Stomach (tissue), 19 donors: ENCODE measurements at regions of chr2 and their contacts with region 1.

Region 1: GRCh38 chr2:157876066-157876787 is at the start of gene ACVR1:
- DNase-seq: peak; percentile 96 to 98
- H3K4me3 ChIP-seq: peak within 1 kb of the TSS; percentile 68 to 87 (median 78)
- H3K27ac ChIP-seq: peak within 1 kb of the TSS; percentile 97 to 100 (median 98)
- H3K4me1 ChIP-seq: peaks cover 26 to 63% (median 45%) of the 10 kb centered on the region in 4 donors
- H3K27me3 ChIP-seq: no peaks in the 10 kb centered on the region
- CTCF ChIP-seq: peak in 1 of 7 experiments; percentile 67
- EP300 ChIP-seq: no peak
- POLR2A ChIP-seq: peak in 1 of 4 donors; percentile 15
- total RNA-seq, gene ACVR1: 2.3 to 32.1 (median 18.4) TPM

Region 2: DNA sequence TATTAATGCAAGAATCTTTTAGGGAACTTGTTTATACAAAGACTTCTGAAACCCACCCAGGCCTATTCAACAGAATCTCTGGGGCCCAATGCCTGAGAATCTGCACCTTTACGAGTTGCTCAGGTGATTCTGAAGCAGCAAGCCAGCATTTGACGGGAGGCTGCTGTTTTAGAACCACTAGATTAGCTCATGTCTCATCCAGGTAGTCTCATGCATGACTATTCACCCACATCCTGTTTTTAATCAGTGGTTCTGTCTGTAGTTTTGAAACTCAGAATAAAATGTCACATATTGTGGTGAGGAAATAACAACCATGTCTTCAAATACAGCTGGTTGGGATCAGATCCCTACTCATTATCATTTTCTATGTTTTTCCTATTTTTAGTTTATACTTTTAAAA is 471.9 kb before region 1 on chr2:
- intact Hi-C with region 1: no loop called
- DNase-seq: peak in 1 of 2 donors; percentile 68
- H3K4me3 ChIP-seq: no peak overlapping the region
- H3K27ac ChIP-seq: peak overlapping the region in 2 of 5 donors; percentile 44 to 58
- H3K4me1 ChIP-seq: no peaks in the 10 kb centered on the region
- H3K27me3 ChIP-seq: no peaks in the 10 kb centered on the region
- CTCF ChIP-seq: no peak
- EP300 ChIP-seq: no peak
- POLR2A ChIP-seq: no peak

Region 3: DNA sequence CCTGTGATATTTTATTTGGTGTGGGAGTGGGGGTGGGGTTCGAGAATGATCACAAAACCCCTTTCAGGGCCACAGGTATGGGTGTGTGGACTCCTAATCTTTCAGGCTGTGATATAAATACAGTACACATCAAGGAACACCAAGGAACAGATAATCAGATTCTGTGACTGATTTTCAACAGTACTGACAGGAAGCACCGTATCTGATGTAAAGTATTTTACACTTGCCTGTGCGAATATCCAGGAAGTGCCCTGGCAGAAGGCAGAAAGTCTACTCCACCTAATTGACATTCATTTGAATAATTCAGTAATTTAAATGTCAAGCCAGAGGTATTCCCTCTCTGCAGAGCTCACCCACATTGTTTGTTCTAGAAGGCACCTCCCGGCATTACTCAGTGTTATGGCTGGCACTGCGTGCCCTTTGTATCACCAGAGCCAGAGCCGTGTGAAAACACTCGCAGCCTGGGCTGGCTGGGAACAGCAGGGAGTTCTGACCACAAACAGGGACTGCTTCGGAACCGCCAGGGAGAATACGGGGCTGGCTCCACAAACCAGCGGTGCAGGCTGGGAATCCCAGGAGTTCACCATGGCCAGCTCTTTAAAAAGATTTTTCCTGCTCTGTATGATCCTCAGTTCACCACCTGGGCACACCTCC is 91.9 kb before region 1 on chr2:
- intact Hi-C with region 1: loop called (anchors 10 kb)
- DNase-seq: peak; percentile 73 to 80
- H3K4me3 ChIP-seq: peak overlapping the region in 2 of 4 donors; percentile 5 to 6
- H3K27ac ChIP-seq: peak overlapping the region; percentile 67 to 91 (median 76)
- H3K4me1 ChIP-seq: peaks cover 39 to 78% (median 69%) of the 10 kb centered on the region in 4 donors
- H3K27me3 ChIP-seq: no peaks in the 10 kb centered on the region
- CTCF ChIP-seq: no peak
- EP300 ChIP-seq: no peak
- POLR2A ChIP-seq: no peak

Region 4: DNA sequence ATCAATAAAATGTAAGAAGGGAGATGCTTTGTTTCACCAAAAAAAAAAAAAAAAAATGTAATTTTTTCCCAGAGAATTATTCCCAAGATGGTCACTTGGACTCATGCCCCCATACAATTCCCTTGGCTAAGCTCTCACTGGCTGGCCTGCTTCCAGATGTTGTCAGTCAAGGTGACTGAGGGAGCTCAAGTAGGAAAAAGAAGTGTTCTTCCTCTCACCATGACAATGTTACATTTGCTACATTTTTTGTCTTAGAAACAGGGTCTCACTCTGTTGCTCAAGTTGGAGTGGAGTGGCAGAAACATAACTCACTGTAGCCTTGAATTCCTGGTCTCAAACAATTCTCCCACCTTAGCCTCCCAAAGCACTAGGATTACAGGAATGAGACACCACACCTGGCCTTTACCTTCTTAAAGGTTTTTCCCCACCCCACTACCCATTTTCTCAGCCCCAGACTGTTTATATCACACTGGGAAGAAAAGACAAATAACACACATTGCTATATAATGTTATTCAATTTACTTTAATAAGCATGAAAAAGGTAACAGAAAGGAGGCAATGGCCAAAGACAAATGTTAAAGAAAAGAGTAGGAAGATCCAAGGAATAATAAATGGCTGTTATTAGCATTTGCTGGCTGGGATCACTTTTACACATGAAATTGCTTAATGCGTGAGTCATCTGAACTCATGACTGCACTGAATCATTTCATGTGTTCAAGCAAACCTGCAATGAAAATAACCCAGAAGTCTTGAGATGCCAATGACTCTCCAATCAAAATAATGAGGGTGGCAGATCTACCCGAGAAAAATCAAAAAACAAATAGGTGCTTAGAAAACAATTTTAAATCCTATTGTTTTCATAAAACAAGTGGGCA is 45.3 kb before region 1 on chr2:
- intact Hi-C with region 1: no loop called
- DNase-seq: peak in 1 of 2 donors; percentile 59
- H3K4me3 ChIP-seq: no peak overlapping the region
- H3K27ac ChIP-seq: peak overlapping the region in 4 of 5 donors; percentile 17 to 62 (median 54)
- H3K4me1 ChIP-seq: peaks cover 8 to 23% (median 14%) of the 10 kb centered on the region in 4 donors
- H3K27me3 ChIP-seq: no peaks in the 10 kb centered on the region
- CTCF ChIP-seq: no peak
- EP300 ChIP-seq: no peak
- POLR2A ChIP-seq: no peak